ENCODE measurements at regions of chr6 and their contacts with region 1.

Region 1: DNA sequence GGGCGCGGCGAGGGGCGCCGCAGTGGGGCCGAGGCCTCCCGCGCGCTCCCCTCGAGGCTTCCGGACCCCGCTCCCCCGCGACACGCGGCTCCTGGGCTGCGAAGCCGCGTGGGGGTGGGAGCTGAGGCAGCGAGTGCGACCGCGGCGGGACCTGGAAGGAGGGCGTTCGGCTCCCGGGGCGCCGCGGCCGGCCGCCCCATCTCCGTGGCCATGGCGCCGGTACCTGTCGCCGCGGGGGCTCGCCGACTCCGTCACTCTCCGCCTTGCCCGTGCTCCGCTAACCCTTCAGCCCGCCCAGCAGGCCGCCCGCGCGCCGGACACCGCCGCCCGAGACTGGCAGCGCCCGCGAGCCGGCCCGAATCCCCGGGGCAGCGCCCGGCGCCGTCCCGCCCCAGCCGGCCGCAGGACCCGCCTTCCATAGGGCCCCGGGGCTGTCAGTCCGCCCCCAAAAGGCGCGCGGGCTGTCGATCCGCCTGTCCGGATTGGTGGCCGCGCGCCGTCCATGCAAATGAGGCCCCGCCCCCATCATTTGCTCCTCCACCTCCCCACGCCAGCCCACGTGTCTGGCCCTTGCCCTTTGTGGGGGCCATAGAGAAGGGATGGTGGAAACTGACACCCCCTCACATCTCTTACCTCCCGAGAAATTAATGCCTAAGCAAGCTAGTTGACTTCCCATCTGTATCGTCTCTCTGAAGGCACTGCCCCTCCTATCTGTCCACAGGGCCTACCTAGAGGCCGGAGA is at the start of gene FKBP5:
- DNase-seq: peak; percentile 95
- H3K4me3 ChIP-seq: peak within 1 kb of the TSS; percentile 94
- H3K27ac ChIP-seq: peak within 1 kb of the TSS; percentile 84
- H3K4me1 ChIP-seq: no peaks in the 10 kb centered on the region
- H3K27me3 ChIP-seq: no peaks in the 10 kb centered on the region
- CTCF ChIP-seq: no peak
- total RNA-seq, gene FKBP5: 29.1 to 54.7 TPM

Region 2: DNA sequence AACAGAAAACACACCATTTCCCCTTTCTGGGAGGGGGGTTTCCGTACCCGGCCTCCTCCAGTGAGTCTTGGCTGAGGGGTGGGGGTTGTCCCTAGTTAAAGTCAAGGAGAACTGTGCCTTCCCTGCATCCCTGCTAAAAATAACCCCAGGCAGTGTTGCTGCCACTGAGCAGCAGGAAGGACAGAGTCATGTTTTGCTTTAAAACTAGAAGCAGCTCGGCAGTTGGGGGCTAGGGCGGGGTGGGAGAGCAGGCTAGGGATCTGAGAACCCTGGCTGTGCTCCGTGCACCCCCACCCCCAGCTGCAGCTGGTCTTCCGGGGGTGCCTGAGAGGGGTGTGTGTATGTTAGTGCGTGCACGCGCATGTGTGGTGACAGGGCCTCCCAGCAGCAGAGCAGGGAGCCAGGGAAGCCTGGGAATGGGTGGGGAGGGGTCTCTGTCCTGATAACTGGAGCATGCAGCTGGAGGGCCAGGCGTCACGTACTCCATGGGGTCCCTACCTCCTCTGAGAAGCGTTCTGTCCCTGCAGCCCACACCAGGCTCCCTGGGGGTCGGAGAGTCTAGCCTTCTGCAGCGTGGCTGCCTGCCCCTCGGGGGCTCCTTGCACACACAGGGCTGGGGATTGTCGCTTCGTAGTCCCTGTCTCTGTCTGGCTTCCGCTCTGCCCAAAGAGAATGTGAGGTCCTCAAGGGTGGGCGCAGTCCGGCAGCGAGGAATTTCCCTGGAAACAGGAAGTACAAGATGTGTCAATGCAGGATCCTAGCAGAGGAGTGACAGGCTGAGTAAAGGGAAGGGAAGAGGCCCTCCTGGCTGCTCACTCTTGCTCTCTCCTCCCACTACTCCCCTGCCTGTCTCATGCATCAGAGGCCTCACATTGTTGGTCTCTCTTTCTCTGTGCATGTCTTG is 31.3 kb after region 1 on chr6:
- intact Hi-C with region 1: loop called (anchors 5 kb)
- DNase-seq: peak; percentile 32
- H3K4me3 ChIP-seq: no peak overlapping the region
- H3K27ac ChIP-seq: peak overlapping the region; percentile 37
- H3K4me1 ChIP-seq: peaks cover 21% of the 10 kb centered on the region
- H3K27me3 ChIP-seq: no peaks in the 10 kb centered on the region
- CTCF ChIP-seq: no peak

Measured in colonic mucosa (tissue), 4 donors.